Panc1 (cell line): ENCODE measurements at regions of chr15 and their contacts with region 1.

Region 1: DNA sequence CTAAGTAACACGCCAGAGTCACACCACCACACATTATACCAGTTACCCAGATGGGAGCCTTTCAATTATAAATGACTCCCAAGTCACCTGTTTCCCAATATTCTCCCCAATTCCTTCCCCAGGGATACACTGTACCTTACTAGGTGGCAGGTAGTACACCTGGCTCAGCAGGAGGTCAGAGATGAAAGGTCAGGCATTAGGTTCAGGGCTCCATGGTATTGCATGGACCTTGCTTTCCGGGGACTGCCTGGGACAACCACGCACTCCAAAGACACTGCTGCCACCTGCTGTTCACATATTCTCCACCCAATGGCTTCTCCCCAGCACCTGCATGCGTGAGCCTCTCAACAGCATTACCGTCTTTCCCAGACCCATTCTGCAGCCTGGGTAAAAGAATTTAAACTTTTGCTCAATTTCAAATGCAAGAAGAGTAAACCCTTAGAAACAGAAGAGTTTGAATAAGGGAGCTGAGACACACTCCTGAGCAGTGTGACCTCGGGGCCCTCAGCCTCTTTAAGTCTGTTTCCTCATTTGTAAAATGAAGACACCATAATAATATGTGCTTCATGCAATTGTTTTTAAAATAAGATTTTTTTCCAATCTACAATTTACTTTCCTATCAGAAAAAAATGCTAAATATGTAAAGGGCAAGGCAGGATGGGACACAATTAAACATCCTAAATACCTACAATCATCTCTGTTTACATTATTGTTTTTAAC is 28.0 kb upstream of the LACTB start:
- DNase-seq: peak; percentile 72
- ATAC-seq: peak; percentile 97
- H3K4me3 ChIP-seq: no peak overlapping the region
- H3K27ac ChIP-seq: no peak overlapping the region
- H3K4me1 ChIP-seq: peaks cover 7% of the 10 kb centered on the region; the same call in 1 of the 2 replicates
- H3K27me3 ChIP-seq: no peaks in the 10 kb centered on the region
- CTCF ChIP-seq: peak; percentile 91

Region 2: DNA sequence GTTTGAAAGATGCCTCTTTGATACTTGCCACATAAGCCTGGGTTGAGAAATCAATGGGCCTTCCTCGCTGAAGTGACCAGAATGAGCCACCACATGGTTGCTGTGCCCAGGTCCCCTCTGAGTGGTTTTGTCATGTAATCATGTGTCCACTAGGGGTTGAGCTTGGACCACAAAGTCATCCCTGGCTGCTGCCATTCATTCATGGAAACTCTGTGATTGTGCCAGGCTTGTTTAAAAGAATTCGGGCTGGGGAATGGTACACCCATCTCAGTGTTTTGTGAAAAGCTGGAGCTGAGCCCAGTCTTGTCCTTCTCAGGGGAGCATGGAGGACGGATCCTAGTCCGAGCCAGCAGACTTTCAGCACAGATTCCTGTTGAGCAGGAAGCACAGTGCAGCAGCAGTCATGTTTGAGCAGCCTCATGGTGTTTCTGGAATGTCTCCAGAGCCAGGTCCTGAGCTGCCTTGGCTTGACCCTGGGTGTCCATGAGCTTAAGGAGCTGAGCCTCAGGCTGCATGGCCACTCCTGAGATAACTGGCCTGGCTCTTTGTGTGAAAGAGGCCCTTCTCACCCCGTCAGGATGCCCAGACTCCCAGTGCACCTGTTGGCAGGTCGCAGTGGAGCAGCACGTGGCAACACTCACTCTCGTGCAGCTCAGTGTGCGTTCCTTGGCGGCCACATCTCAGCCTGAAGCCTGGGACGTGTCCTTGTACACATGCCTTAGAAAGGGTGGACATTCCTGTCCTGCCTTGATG is 311.4 kb before region 1 on chr15:
- CTCF ChIA-PET with region 1: interaction called, 3 read pairs
- POLR2A ChIA-PET with region 1: no interaction called
- in situ Hi-C with region 1: no loop called
- intact Hi-C with region 1: loop called (anchors 1 kb)
- DNase-seq: peak; percentile 69
- ATAC-seq: peak; percentile 95
- H3K4me3 ChIP-seq: no peak overlapping the region
- H3K27ac ChIP-seq: peak overlapping the region; percentile 64
- H3K4me1 ChIP-seq: peaks cover 24% of the 10 kb centered on the region
- H3K27me3 ChIP-seq: no peaks in the 10 kb centered on the region
- CTCF ChIP-seq: peak; percentile 86

Region 3: GRCh38 chr15:62847900-62848489 is 245.7 kb before region 1 on chr15:
- CTCF ChIA-PET with region 1: no interaction called
- POLR2A ChIA-PET with region 1: no interaction called
- in situ Hi-C with region 1: no loop called
- intact Hi-C with region 1: loop called (anchors 2 kb)
- DNase-seq: peak; percentile 52
- ATAC-seq: peak; percentile 74
- H3K4me3 ChIP-seq: no peak overlapping the region
- H3K27ac ChIP-seq: peak overlapping the region; percentile 48; the same call in 1 of the 2 replicates
- H3K4me1 ChIP-seq: peaks cover 39% of the 10 kb centered on the region
- H3K27me3 ChIP-seq: no peaks in the 10 kb centered on the region
- CTCF ChIP-seq: peak; percentile 85

Region 4: DNA sequence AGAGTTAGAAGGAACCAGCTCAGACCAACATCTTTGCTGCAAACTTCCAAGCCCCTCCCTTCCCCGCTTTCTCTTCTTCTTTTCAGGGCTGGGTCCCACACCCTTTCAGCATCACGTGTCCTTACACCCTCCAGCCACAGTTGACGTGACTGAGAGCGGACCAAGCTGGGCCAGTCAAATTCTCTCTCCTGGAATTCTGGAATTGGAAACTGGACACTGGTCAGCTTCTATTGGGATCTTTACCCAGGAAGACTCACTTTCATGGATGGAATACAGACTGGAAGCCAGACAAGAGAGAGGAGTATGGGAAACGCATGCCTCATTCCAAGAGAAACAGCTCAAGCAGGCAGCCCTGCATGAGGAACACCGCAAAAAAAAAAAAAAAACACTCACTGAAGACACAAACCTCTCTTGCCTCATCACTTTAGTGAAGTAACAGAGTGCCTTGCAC is 63.5 kb before region 1 on chr15:
- CTCF ChIA-PET with region 1: no interaction called
- POLR2A ChIA-PET with region 1: interaction called, 11 read pairs
- in situ Hi-C with region 1: no loop called
- intact Hi-C with region 1: no loop called
- DNase-seq: no peak
- ATAC-seq: no peak
- H3K4me3 ChIP-seq: no peak overlapping the region
- H3K27ac ChIP-seq: no peak overlapping the region
- H3K4me1 ChIP-seq: no peaks in the 10 kb centered on the region
- H3K27me3 ChIP-seq: no peaks in the 10 kb centered on the region
- CTCF ChIP-seq: no peak